Activated CD4-positive, alpha-beta T cell treated with anti-CD3 and anti-CD28 coated beads, Interleukin-2, amount 10 ng/mL, durations not matched to agents 24 days and 14 days (primary cell): ENCODE measurements at regions of chr17 and their contacts with region 1.

Region 1: DNA sequence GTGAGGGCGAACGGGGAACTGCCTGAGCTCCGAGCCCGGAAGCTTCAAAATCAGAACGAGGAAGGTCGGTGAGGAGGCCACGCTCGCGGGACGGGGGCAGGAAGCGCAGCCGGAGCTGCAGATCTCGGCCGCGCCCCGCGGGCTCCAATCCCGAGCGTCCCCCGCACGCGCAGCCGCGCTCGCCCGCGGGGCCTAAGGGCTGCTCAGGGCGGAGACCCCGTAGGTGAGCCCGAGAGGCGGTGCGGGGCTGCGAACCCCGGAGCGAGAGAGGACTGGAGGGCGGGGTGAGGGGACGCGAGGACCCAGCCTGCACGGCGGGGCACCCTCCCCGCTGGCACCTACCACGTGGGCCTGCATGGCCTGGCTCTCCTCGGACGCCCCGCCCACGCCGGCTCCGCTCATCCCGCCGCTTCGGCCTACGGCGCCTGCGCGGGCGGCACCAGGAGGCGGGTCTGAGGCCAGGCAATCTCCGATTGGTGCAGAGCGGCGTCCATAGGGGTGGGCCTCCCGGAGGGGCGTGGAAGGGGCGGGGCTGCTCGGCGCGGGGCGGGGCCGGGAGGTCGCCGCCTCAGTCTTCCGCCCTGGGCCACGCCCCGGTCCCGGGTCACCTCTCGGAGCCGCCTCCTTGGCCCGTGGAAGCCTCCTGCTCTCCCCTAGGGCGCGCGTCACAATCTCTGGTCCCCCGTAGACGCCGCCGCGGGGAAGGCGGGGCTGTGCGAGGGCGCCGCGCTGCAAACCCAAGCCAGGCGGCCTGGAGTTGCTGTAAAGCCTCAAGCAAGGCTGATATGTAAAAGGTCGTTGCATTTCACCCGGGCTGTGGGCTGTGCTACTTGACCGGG is 27.8 kb upstream of the METRNL start:
- DNase-seq: peak; percentile 99
- H3K4me3 Mint-ChIP-seq: peak overlapping the region; percentile 86
- H3K27ac Mint-ChIP-seq: peak overlapping the region; percentile 91
- H3K4me1 Mint-ChIP-seq: peaks cover 27% of the 10 kb centered on the region
- H3K27me3 Mint-ChIP-seq: no peaks in the 10 kb centered on the region

Region 2: DNA sequence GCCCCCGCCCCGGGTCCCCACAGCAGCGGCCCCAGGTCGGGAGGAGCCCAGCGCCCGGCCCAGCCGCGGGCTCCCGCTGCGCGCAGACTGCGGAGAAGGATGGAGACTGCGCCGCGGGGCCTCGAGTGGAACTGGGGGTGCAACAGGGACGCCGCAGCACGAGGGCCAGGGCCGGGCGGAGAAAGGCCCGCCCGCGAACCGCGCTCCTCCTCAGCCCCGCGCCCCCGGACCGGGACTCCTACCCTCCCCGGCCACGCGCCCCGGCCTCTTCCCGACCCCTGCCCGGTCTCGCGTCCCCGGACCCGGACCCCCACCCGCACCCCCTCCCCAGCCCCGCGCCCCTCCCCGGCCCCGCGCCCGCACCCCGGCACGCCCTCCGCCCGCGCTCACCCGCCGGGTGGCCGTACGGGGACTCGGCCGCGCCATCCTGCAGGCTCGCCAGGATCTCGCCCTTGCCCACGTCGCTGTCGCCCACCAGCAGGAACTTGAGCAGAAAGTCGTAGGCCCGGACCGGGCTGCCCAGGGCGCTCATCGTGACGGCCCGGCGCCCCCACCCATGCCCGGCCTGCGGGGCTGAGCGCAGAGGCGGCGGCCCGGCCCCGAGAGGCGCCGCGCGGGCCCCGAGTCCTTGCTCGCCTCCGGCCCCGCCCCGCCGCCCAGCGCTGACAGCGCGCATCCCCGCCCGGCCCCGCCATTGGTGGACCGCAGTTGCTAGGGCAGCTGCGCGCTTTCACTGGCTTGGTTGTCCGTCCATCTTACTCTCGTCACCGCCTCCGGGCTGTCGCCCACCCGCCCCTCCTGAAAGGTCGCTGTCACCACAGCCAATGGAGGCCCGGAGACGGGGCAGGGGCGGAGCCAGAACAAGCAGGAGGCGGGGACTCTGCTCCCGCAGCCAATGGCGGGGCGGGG is 353.3 kb before region 1 on chr17 and contains the start of gene RAB40B:
- intact Hi-C with region 1: loop called (anchors 1 kb)
- DNase-seq: peak; percentile 99
- H3K4me3 Mint-ChIP-seq: peak within 1 kb of the TSS; percentile 84
- H3K27ac Mint-ChIP-seq: no peak within 1 kb of the TSS
- H3K4me1 Mint-ChIP-seq: peaks cover 4% of the 10 kb centered on the region
- H3K27me3 Mint-ChIP-seq: peaks cover 10% of the 10 kb centered on the region
- total RNA-seq, gene RAB40B: 4.9 and 5.4 TPM in 2 replicates

Region 3: GRCh38 chr17:82863941-82864774 is 187.5 kb before region 1 on chr17:
- intact Hi-C with region 1: loop called (anchors 5 kb)
- DNase-seq: peak; percentile 97
- H3K4me3 Mint-ChIP-seq: peak overlapping the region; percentile 85
- H3K27ac Mint-ChIP-seq: peak overlapping the region; percentile 96
- H3K4me1 Mint-ChIP-seq: peaks cover 65% of the 10 kb centered on the region
- H3K27me3 Mint-ChIP-seq: no peaks in the 10 kb centered on the region

Region 4: DNA sequence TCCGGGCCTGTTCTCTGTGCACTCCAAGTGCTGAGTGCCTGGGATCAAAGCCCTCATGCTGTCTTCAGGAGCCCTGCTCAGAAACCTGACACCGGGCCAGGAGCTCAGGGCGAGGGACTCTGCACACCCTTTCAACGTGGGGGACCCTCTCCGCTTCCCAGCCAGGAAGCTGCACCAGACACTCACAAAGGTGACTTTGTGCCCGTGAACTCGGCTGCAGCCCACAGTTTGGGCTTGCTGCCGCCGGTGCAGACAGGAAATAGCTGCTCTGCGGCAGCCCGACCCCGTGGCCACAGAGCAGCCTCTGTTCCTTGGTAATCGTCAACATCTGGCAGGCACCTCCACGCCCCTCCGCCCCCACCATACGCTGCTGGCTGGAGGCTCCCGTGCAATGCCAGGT is 65.6 kb before region 1 on chr17:
- intact Hi-C with region 1: loop called (anchors 5 kb)
- DNase-seq: peak; percentile 91
- H3K4me3 Mint-ChIP-seq: peak overlapping the region; percentile 81
- H3K27ac Mint-ChIP-seq: peak overlapping the region; percentile 78
- H3K4me1 Mint-ChIP-seq: peaks cover 25% of the 10 kb centered on the region
- H3K27me3 Mint-ChIP-seq: peaks cover 1% of the 10 kb centered on the region

Region 5: GRCh38 chr17:83083323-83084201 is 31.9 kb after region 1 on chr17:
- intact Hi-C with region 1: loop called (anchors 1 kb)
- DNase-seq: peak; percentile 80
- H3K4me3 Mint-ChIP-seq: peak overlapping the region; percentile 64
- H3K27ac Mint-ChIP-seq: peak overlapping the region; percentile 85
- H3K4me1 Mint-ChIP-seq: peaks cover 38% of the 10 kb centered on the region
- H3K27me3 Mint-ChIP-seq: no peaks in the 10 kb centered on the region